ENCODE measurements at regions of chr1 and their contacts with region 1.

Region 1: GRCh38 chr1:1906185-1907097 is 8.6 kb upstream of the CALML6 start:
- DNase-seq: peak; percentile 87 to 94 (median 90)
- H3K4me3 ChIP-seq: no peak overlapping the region
- H3K27ac ChIP-seq: peak overlapping the region in 2 of 5 donors; percentile 42 to 46
- H3K4me1 ChIP-seq: peaks cover 5 to 19% of the 10 kb centered on the region in 2 donors
- H3K27me3 ChIP-seq: no peaks in the 10 kb centered on the region
- CTCF ChIP-seq: peak; percentile 80 to 98 (median 96)
- POLR2A ChIP-seq: no peak

Region 2: DNA sequence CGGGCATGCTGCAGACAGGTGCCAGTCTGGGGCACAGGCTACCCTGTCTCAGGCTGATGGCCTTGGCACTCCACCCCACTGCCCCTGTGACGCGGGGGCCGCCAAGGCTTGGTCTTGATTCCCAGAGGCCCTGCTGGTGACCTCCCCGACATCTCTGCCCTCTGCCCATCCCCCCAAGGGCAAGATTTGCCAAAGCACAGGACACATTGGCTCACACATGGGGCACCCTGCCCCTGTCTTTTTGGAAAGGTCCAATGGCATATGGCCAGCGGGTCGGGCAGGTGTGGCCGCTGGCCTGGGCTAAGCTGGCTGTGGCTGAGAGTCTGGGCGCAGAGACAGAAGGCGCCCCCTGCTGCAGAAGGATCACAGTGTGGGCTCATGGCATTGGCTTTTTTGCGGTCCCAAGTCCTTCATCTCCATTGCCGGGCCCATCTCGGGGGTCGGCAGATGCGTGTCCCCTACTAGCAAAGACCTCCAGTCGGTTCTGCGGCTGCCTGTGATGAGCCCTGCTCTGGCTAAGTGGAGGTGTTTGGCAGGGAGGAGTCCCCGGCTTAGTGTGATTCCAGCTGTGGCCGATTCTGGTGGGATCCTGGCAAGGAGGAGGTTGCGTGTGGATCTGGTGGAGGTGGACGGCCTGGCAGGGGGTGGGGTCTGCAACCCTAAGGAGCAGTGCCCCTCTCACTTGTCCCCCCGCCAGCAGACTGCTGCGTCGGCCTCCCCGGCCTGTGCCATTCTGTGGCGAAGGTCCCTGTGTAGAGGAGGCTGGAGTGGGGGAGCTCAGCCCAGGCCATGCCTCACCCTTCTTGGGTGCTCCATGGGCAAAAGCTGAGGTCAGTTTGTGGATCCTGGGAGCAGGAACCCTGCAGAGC is 286.3 kb before region 1 on chr1:
- intact Hi-C with region 1: no loop called
- DNase-seq: no peak
- H3K4me3 ChIP-seq: no peak overlapping the region
- H3K27ac ChIP-seq: no peak overlapping the region
- H3K4me1 ChIP-seq: peaks cover 8 to 13% of the 10 kb centered on the region in 2 donors
- H3K27me3 ChIP-seq: no peaks in the 10 kb centered on the region
- CTCF ChIP-seq: peak in 1 of 6 experiments; percentile 19
- POLR2A ChIP-seq: no peak

Region 3: DNA sequence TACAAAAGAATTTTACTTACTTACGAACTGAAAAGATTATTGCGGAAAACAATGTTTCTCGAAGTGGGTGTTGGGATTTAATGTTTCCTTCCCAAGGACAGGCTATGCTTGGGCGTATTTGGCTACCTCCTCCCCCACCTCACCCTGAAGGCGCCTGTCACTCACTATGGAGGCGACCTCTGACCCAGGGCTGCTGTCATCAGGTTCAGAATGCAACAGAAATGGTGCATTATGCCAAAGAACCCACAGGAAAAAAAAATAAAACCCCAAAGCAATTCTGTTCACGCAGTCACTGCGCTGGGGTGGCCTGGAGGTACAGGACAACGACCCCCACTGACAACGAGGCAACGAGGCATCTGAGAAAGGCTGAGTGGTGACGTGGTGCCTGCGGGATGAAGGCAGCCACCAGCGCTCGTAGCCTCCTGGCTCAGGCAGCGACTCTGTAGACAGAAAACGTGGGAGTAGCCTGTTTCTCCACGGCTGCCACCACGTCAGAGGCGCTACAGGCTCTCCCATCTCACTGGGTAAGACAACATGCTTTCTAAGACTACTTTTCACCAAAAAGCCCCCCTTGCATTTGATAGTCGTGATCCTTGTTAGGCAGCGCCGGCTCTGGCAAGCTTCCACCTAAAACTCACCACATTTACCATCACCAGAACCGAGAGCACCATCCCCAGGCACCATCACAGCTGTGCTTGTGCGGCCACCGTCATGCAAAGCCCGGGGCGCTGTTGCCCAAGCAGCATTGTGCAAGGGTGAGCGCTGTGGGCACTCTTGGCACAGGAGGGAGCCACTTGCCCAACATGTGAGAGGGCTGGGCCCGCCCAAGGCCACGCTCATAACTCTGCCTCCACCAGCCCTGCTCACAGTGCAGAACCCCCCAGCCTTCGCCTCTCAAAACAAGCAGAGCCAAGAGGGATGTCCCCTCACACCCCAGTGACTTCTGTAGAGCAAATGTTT is 142.5 kb before region 1 on chr1:
- intact Hi-C with region 1: loop called in 1 of 2 experiments (anchors 5 kb)
- DNase-seq: peak; percentile 87 to 98 (median 97)
- H3K4me3 ChIP-seq: no peak overlapping the region
- H3K27ac ChIP-seq: peak overlapping the region; percentile 49 to 87 (median 77)
- H3K4me1 ChIP-seq: peaks cover 26 to 32% of the 10 kb centered on the region in 2 donors
- H3K27me3 ChIP-seq: no peaks in the 10 kb centered on the region
- CTCF ChIP-seq: peak in 5 of 6 experiments; percentile 14 to 46 (median 33)
- POLR2A ChIP-seq: peak in 1 of 2 donors; percentile 50

Region 4: DNA sequence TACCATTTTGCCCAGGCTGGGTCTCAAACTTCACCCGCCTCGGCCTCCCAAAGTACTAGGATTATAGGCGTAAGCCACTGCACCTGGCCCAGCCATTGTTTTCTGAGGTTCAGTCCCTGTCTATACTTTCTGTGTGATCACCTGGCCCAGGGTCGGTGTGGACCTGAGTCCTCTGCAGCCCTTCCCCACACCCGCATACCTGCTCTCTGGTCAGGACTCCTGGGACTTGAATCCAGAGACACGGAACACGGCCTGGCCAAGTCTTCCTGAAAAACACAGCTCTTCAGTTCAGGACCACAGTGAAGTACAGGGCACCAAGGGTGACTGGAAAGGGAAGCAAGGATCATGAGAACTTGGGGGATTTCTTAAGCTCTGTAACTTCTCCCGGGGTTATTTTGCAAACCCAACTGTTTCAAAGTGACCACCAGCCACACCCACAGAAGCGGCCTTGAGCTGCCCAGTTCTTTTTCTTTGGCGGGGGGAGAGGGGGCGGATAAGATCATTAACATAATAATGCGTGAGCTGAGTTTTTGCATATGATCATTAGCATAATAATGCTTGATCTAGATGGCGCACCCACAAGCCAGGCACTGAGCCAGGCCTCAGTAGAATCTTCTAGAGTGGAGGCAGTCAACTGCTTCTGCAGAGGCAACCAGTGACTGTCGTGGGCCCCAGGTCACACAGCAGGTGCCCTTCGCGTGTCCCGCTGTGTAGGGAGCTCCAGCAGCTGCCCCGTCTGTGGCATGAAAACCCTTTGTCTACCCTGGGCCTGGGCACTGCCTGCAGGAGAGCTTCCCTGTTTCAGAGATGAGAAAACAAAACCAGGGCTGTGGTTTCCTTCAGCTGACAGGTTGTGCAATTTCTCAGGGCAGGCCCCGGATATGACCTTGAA is 126.5 kb before region 1 on chr1:
- intact Hi-C with region 1: loop called in 1 of 2 experiments (anchors 10 kb)
- DNase-seq: peak; percentile 51 to 83 (median 65)
- H3K4me3 ChIP-seq: peak overlapping the region in 1 of 4 donors; percentile 76
- H3K27ac ChIP-seq: peak overlapping the region; percentile 41 to 98 (median 95)
- H3K4me1 ChIP-seq: peaks cover 71 to 76% of the 10 kb centered on the region in 2 donors
- H3K27me3 ChIP-seq: no peaks in the 10 kb centered on the region
- CTCF ChIP-seq: no peak
- POLR2A ChIP-seq: peak in 1 of 2 donors; percentile 21